IMR-90 (cell line): ENCODE measurements at regions of chr19 and their contacts with region 1.

Region 1: GRCh38 chr19:17703824-17704463 is 15.3 kb upstream of the MAP1S start:
- DNase-seq: peak; percentile 31
- ATAC-seq: peak; percentile 67
- H3K4me3 ChIP-seq: no peak overlapping the region
- H3K27ac ChIP-seq: no peak overlapping the region
- H3K4me1 ChIP-seq: no peaks in the 10 kb centered on the region
- H3K27me3 ChIP-seq: peaks cover 5% of the 10 kb centered on the region; the same call in 1 of the 2 replicates
- CTCF ChIP-seq: peak; percentile 54
- POLR2A ChIP-seq: no peak
- RAD21 ChIP-seq: peak; percentile 45; the same call in 1 of the 2 replicates

Region 2: GRCh38 chr19:17775245-17775916 is 71.4 kb after region 1 on chr19:
- CTCF ChIA-PET with region 1: no interaction called
- POLR2A ChIA-PET with region 1: no interaction called
- dilution Hi-C with region 1: no loop called
- in situ Hi-C with region 1: no loop called
- intact Hi-C with region 1: loop called (anchors 2 kb)
- DNase-seq: peak; percentile 19
- ATAC-seq: peak; percentile 54; the same call in 1 of the 2 replicates
- H3K4me3 ChIP-seq: no peak overlapping the region
- H3K27ac ChIP-seq: no peak overlapping the region
- H3K4me1 ChIP-seq: no peaks in the 10 kb centered on the region
- H3K27me3 ChIP-seq: peaks cover under 1% of the 10 kb centered on the region; the same call in 1 of the 2 replicates
- CTCF ChIP-seq: peak; percentile 65
- POLR2A ChIP-seq: no peak
- RAD21 ChIP-seq: peak; percentile 51